Activated naive CD4-positive, alpha-beta T cell treated with anti-CD3 and anti-CD28 coated beads for 36 hours (primary cell): ENCODE measurements at regions of chr12 and their contacts with region 1.

Region 1: DNA sequence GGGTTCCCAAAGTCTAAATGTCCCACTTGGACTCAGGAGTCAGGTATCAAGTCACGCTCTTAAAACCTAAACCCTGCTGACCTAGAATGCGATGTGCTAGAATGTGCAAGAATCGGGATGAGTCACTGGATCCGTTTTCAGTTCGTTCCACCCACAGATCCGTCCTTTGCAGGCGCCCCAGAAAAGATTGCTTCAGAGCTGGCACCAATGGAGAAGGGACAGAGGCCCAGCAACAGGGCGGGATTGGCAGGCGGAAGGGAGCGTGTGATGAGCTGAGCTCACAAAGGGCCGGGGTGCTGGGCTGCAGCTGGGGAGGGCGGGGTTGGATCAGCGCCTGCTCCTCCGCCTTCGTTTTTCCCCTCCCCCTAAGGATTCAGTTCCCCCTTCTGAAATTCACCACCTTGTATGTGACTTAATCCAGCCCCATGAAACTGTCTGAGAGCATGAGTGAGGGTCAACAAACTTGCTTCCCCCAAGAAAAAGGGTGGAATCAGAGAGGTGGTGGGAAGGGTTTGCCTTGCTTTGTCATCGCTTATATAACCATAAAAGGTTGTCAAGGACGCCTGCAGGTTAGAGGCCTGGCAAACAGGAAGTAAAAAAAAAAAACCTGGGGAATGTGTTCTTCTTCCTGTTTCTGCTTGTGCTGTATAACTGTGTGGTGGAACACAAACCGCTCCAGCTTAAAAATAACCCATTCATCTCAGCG is 2.8 kb upstream of the UBC start:
- DNase-seq: peak; percentile 98
- H3K4me3 Mint-ChIP-seq: peak overlapping the region; percentile 73
- H3K27ac Mint-ChIP-seq: peak overlapping the region; percentile 100
- H3K4me1 Mint-ChIP-seq: peaks cover 83% of the 10 kb centered on the region
- H3K27me3 Mint-ChIP-seq: peaks cover 6% of the 10 kb centered on the region

Region 2: GRCh38 chr12:124745891-124746570 is 171.3 kb before region 1 on chr12:
- CTCF ChIA-PET with region 1: no interaction called
- intact Hi-C with region 1: no loop called
- DNase-seq: peak; percentile 53
- H3K4me3 Mint-ChIP-seq: no peak overlapping the region
- H3K27ac Mint-ChIP-seq: no peak overlapping the region
- H3K4me1 Mint-ChIP-seq: peaks cover 16% of the 10 kb centered on the region
- H3K27me3 Mint-ChIP-seq: peaks cover 7% of the 10 kb centered on the region

Region 3: GRCh38 chr12:124906606-124907261 is 10.6 kb before region 1 on chr12:
- CTCF ChIA-PET with region 1: interaction called, 27 read pairs
- intact Hi-C with region 1: loop called (anchors 1 kb)
- DNase-seq: peak; percentile 98
- H3K4me3 Mint-ChIP-seq: no peak overlapping the region
- H3K27ac Mint-ChIP-seq: peak overlapping the region; percentile 12
- H3K4me1 Mint-ChIP-seq: peaks cover 19% of the 10 kb centered on the region
- H3K27me3 Mint-ChIP-seq: no peaks in the 10 kb centered on the region

Region 4: DNA sequence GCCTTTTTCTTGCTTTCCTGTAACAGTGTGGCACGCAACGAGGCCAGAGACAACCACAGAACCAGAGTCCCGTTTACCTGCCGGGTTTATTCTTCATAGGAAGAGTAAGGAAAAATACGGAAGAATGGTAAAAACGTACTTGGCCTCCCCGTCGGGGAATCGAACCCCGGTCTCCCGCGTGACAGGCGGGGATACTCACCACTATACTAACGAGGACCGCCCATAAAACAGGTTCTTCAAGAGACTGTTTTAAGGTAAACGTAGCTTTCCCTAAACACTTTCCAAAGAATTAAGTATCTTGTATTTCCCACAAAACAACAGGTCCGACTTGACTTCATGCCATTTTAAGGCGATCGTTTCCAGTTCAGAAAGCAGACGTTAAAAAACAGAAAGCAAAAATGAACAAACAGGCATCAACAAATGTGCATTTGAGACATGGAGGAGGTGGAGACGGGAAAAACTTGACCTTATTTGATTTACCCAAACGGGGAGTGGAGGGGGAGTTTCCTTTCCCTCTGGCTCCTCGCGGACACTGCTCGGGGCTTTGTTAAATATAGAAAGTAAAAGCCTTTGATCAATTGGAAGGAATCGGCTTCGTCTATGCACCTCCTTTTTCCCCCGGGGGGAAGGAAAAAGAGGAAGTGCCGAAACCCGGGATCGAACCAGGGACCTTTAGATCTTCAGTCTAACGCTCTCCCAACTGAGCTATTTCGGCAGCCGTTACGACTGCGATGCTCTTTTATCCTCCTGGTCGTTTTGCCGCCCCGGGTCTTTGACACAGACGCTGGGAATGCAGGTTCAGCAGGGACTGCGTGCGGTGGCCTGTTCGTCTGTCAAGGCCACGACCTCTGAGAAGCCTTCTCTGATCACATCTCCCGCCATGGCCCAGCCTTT is 10.2 kb after region 1 on chr12:
- CTCF ChIA-PET with region 1: interaction called, 8 read pairs
- intact Hi-C with region 1: loop called (anchors 1 kb)
- DNase-seq: peak; percentile 97
- H3K4me3 Mint-ChIP-seq: peak overlapping the region; percentile 95
- H3K27ac Mint-ChIP-seq: peak overlapping the region; percentile 99
- H3K4me1 Mint-ChIP-seq: peaks cover 28% of the 10 kb centered on the region
- H3K27me3 Mint-ChIP-seq: peaks cover 6% of the 10 kb centered on the region

Region 5: GRCh38 chr12:125503128-125503527 is 585.8 kb after region 1 on chr12:
- CTCF ChIA-PET with region 1: no interaction called
- intact Hi-C with region 1: no loop called
- DNase-seq: no peak
- H3K4me3 Mint-ChIP-seq: no peak overlapping the region
- H3K27ac Mint-ChIP-seq: no peak overlapping the region
- H3K4me1 Mint-ChIP-seq: no peaks in the 10 kb centered on the region
- H3K27me3 Mint-ChIP-seq: peaks cover 2% of the 10 kb centered on the region